Common myeloid progenitor, CD34-positive (primary cell): ENCODE measurements at regions of chr17 and their contacts with region 1.

Region 1: DNA sequence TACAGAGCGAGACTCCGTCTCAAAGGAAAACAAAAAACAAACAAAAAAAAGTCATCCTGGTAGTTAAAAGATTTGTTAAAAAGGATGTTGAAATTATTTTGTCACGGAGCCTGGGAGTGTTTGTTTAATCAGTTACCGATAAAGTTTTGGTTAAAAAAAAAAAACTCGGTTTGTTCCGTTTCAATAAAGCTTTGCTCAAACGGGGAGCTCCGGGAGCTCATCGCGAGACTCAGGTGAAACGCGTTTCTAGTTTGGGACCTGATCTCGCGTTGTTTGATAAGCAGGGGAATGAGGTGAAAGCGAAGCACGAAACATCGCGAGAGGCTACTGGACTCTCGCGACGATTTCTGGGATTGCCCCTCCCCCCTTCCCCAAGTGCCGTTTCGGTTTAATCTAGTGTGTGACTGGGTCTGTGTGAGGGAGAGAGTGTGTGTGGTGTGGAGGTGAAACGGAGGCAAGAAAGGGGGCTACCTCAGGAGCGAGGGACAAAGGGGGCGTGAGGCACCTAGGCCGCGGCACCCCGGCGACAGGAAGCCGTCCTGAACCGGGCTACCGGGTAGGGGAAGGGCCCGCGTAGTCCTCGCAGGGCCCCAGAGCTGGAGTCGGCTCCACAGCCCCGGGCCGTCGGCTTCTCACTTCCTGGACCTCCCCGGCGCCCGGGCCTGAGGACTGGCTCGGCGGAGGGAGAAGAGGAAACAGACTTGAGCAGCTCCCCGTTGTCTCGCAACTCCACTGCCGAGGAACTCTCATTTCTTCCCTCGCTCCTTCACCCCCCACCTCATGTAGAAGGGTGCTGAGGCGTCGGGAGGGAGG is at the start of gene CDK12:
- DNase-seq: peak; percentile 100
- H3K4me3 ChIP-seq: peak within 1 kb of the TSS; percentile 72 to 99 (median 88)
- H3K27ac ChIP-seq: peak within 1 kb of the TSS; percentile 97 to 99
- H3K4me1 ChIP-seq: peaks cover 12 to 34% (median 25%) of the 10 kb centered on the region in 4 experiments
- H3K27me3 ChIP-seq: no peaks in the 10 kb centered on the region

Region 2: GRCh38 chr17:39402244-39402889 is 59.0 kb before region 1 on chr17:
- CTCF ChIA-PET with region 1: no interaction called
- POLR2A ChIA-PET with region 1: no interaction called
- DNase-seq: peak; percentile 86 to 88 (median 87)
- H3K4me3 ChIP-seq: peak overlapping the region; percentile 86 to 98 (median 90)
- H3K27ac ChIP-seq: peak overlapping the region in 1 of 2 experiments; percentile 93
- H3K4me1 ChIP-seq: peaks cover 6 to 19% (median 12%) of the 10 kb centered on the region in 4 experiments
- H3K27me3 ChIP-seq: no peaks in the 10 kb centered on the region

Region 3: DNA sequence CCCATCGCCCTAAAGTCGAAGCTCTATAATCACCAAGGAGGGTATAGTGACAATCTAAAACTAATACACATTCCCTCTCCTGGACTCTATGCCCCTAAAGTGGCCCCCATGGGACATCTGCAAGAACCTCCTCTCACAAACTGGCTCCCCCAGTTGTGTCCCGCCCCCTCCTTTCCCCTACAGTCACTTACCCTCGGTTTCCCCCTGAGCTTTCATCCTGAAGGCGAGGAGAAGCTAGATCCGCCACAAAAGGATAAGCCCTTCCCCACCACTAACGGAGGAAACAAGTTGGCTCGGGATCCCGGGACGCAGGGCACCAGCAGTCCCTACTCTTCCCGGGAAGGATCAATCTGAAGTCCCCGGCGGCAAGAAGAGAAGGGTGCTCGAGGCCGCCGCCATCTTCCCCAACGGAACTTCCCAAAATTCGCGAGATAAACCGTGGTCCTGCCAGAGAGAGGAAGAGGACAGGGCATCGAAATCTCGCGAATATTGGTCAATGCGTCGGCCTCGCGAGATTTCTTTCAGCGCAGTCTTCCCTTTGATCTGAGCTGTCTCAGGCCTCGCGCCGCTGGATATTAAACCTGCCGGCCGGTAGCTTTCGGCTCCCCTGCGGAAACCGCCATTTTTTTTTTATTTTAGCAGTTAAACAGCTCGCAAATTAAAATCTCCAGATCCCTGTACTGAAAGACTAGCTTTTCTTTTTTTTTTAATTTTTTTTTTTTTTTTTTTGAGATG is 10.3 kb before region 1 on chr17 and contains the start of gene MED1:
- CTCF ChIA-PET with region 1: interaction called, 4 read pairs
- POLR2A ChIA-PET with region 1: interaction called, 29 read pairs
- DNase-seq: peak; percentile 99
- H3K4me3 ChIP-seq: peak within 1 kb of the TSS; percentile 57 to 99 (median 92)
- H3K27ac ChIP-seq: peak within 1 kb of the TSS; percentile 98 to 99
- H3K4me1 ChIP-seq: peaks cover 7 to 21% (median 13%) of the 10 kb centered on the region in 4 experiments
- H3K27me3 ChIP-seq: no peaks in the 10 kb centered on the region

Region 4: GRCh38 chr17:40182606-40183005 is 721.3 kb after region 1 on chr17:
- CTCF ChIA-PET with region 1: no interaction called
- POLR2A ChIA-PET with region 1: interaction called, 12 read pairs
- DNase-seq: no peak
- H3K4me3 ChIP-seq: no peak overlapping the region
- H3K27ac ChIP-seq: no peak overlapping the region
- H3K4me1 ChIP-seq: peaks cover 0 to 8% (median 4%) of the 10 kb centered on the region in 4 experiments
- H3K27me3 ChIP-seq: peaks cover 0 to 8% (median 0%) of the 10 kb centered on the region in 5 experiments